ENCODE measurements at regions of chr21 and their contacts with region 1.

Region 1: DNA sequence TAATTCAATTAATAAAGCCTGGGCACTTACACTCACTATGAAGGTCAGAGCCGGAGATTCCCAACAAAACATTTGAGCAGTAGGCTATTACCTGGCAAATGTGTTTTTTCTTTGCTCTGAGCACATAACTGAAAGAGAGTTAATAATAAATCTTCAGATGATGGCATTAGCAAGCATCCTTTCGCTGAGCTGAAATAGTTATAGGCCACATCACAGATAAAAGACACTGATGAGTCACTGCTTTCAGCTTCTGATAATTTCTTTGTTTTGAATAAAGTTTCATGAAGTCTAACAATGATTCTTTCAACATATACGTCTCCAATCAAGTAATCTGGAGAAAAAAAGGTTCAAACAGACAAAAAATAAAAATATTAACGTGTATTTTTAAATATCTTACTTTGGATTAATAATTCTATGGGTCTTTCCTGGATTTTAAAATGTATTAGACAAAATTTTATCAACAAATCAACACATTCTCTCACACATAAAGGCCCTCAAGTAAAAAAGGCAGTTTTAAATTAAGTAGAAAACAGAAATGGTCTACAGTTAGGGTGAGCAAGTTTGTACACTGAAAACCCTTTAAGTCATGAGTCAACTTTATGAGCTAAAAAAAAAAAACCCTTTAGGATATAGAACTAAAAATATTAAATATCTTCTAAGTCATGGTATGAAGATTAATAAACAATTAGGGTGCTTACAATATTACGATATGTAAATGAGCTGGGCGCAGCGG is 33.1 kb downstream of the LTN1 start:
- DNase-seq: peak; percentile 33
- H3K4me3 ChIP-seq: no peak overlapping the region
- CTCF ChIP-seq: no peak

Region 2: GRCh38 chr21:28884976-28885852 is 74.3 kb before region 1 on chr21:
- in situ Hi-C with region 1: loop called (anchors 5 kb)
- DNase-seq: peak; percentile 77
- H3K4me3 ChIP-seq: peak overlapping the region; percentile 56
- CTCF ChIP-seq: no peak